Natural killer cell (primary cell): ENCODE measurements at regions of chr6 and their contacts with region 1.

Region 1: DNA sequence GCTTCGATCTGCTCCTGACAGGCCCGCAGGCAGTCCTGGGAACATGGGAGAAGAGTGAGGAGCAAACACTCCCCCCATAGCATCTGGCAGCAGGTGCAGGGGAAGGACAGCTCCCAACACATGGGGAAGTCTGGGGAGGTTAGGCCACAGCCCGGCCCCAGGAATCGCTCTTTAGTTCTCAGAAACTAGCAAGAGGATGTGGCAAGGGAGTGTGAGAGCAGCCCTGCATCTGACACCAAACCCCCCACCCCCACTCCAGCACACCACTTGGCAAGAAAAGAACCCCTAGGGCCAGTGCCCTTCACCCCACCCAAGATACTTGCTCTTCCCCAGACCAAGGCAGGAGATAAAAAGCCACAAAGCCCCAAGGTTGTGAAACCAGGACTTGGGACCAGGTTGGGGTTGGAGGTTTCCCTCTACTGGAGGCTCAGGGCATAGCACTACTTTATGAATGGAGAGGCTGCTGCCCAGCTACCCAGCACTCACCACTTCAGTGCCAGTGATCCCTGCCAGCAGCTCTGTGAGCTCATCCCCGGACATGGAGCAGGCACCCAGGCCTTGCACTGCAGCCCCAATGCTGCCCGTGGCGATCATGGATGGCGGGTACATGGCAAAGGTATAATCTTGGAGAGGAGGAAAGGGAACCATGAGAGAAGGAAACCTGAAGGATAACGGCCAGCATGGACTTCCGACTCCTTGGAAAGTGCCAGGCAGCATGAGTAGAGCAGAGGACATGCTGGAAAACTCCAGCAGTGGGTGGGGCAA is 5.4 kb downstream of the CCND3 start:
- DNase-seq: peak; percentile 68 to 92
- ATAC-seq: peak; percentile 82 to 93 (median 89)
- H3K4me3 ChIP-seq: peak overlapping the region; percentile 10
- H3K4me3 Mint-ChIP-seq: peak overlapping the region; percentile 97
- H3K27ac ChIP-seq: peak overlapping the region; percentile 57
- H3K27ac Mint-ChIP-seq: peak overlapping the region; percentile 88 to 95
- H3K4me1 ChIP-seq: peaks cover 86% of the 10 kb centered on the region
- H3K4me1 Mint-ChIP-seq: peaks cover 80 to 89% of the 10 kb centered on the region in 2 donors
- H3K27me3 ChIP-seq: no peaks in the 10 kb centered on the region
- H3K27me3 Mint-ChIP-seq: no peaks in the 10 kb centered on the region
- CTCF ChIP-seq: peak; percentile 65

Region 2: GRCh38 chr6:41741625-41742489 is 194.4 kb before region 1 on chr6:
- intact Hi-C with region 1: no loop called
- DNase-seq: no peak
- ATAC-seq: no peak
- H3K4me3 ChIP-seq: no peak overlapping the region
- H3K4me3 Mint-ChIP-seq: no peak overlapping the region
- H3K27ac ChIP-seq: no peak overlapping the region
- H3K27ac Mint-ChIP-seq: no peak overlapping the region
- H3K4me1 ChIP-seq: no peaks in the 10 kb centered on the region
- H3K4me1 Mint-ChIP-seq: no peaks in the 10 kb centered on the region
- H3K27me3 ChIP-seq: no peaks in the 10 kb centered on the region
- H3K27me3 Mint-ChIP-seq: peaks cover 0 to 6% of the 10 kb centered on the region in 2 donors
- CTCF ChIP-seq: no peak

Region 3: DNA sequence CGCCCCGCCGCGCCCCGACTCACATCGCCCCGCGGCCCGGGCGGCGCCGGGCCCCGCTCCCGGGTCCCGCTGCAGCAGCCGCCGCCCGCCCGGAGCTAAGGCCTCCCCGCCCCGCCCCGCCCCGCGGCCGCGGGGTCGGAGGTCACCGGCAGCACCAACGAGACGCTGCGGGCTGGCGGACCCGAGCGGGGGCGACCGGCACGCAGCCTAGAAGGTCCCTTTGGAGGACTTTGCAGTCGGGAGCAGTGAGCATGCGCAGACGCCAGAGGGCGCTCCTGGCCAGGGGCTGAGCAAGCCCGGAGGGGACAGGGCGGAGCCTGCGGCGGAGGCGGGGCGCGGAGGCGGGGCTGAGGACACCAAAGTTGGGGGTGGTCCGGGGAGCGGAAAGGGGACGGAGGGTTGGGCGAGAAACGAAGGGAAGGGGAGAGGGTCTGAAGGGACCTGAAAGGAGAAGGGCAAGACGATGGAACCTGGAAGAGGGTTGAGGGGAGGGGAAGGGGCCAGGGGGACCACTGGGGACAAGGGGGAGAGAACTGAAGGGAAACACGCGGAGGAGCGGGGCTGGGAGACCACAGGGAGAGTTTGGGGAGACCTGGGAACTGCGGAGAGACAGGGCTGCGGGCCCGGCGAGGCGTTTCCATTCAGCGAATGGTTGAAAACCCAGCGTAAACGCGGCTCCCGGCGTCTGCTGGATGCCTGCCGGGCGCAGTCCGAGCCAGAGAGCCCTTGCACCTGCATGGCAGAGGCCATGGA is 156.3 kb before region 1 on chr6 and contains the start of gene FRS3:
- intact Hi-C with region 1: loop called (anchors 2 kb)
- DNase-seq: peak; percentile 99
- ATAC-seq: peak; percentile 96 to 100 (median 98)
- H3K4me3 ChIP-seq: peak within 1 kb of the TSS; percentile 40
- H3K4me3 Mint-ChIP-seq: peak within 1 kb of the TSS; percentile 92
- H3K27ac ChIP-seq: no peak within 1 kb of the TSS
- H3K27ac Mint-ChIP-seq: peak within 1 kb of the TSS in 1 of 2 donors; percentile 80
- H3K4me1 ChIP-seq: peaks cover 22% of the 10 kb centered on the region
- H3K4me1 Mint-ChIP-seq: peaks cover 7 to 22% of the 10 kb centered on the region in 2 donors
- H3K27me3 ChIP-seq: no peaks in the 10 kb centered on the region
- H3K27me3 Mint-ChIP-seq: peaks cover 0 to 3% of the 10 kb centered on the region in 2 donors
- CTCF ChIP-seq: peak; percentile 77
- total RNA-seq, gene FRS3: 4.5 to 5.7 (median 5.4) TPM

Region 4: GRCh38 chr6:41895300-41896233 is 40.7 kb before region 1 on chr6 and contains the start of gene USP49:
- intact Hi-C with region 1: loop called (anchors 1 kb)
- DNase-seq: peak; percentile 92 to 95
- ATAC-seq: peak; percentile 88 to 96 (median 90)
- H3K4me3 ChIP-seq: peak within 1 kb of the TSS; percentile 86
- H3K4me3 Mint-ChIP-seq: no peak within 1 kb of the TSS
- H3K27ac ChIP-seq: peak within 1 kb of the TSS; percentile 85
- H3K27ac Mint-ChIP-seq: no peak within 1 kb of the TSS
- H3K4me1 ChIP-seq: peaks cover 14% of the 10 kb centered on the region
- H3K4me1 Mint-ChIP-seq: peaks cover 11 to 13% of the 10 kb centered on the region in 2 donors
- H3K27me3 ChIP-seq: no peaks in the 10 kb centered on the region
- H3K27me3 Mint-ChIP-seq: no peaks in the 10 kb centered on the region
- CTCF ChIP-seq: no peak
- total RNA-seq, gene USP49: 6.4 to 15.1 (median 11.5) TPM

Region 5: DNA sequence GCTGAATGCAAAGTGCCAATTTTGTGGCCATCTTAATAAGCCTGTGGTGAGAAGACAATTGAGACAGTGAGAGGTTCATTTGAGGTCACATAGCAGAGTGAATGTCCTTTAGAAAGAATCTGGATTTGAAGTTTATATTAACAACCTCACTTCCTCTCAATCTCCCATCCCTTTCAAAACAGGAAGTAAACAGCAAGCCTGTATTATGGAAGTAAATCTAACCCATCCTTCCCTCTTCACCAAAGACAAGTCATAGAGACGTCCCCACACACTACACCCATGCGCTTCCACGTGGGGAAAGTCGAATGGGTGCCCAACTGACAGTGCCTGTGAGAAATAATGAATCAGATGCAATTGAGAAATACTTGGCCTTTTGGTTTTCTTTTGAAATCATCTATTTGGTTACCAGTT is 34.2 kb after region 1 on chr6:
- intact Hi-C with region 1: loop called (anchors 5 kb)
- DNase-seq: peak; percentile 28 to 31
- ATAC-seq: peak; percentile 76 to 85 (median 84)
- H3K4me3 ChIP-seq: no peak overlapping the region
- H3K4me3 Mint-ChIP-seq: peak overlapping the region; percentile 67
- H3K27ac ChIP-seq: peak overlapping the region; percentile 48
- H3K27ac Mint-ChIP-seq: peak overlapping the region; percentile 71 to 89
- H3K4me1 ChIP-seq: peaks cover 64% of the 10 kb centered on the region
- H3K4me1 Mint-ChIP-seq: peaks cover 75 to 82% of the 10 kb centered on the region in 2 donors
- H3K27me3 ChIP-seq: no peaks in the 10 kb centered on the region
- H3K27me3 Mint-ChIP-seq: no peaks in the 10 kb centered on the region
- CTCF ChIP-seq: no peak